ENCODE measurements at regions of chr17 and their contacts with region 1.

Region 1: GRCh38 chr17:35170968-35171771 is 23.0 kb downstream of the SLC35G3 start:
- DNase-seq: no peak
- H3K4me3 ChIP-seq: no peak overlapping the region
- H3K27ac ChIP-seq: peak overlapping the region in 4 of 8 donors; percentile 4 to 20 (median 10)
- H3K4me1 ChIP-seq: peaks cover 0 to 20% (median 10%) of the 10 kb centered on the region in 6 donors
- H3K27me3 ChIP-seq: no peaks in the 10 kb centered on the region
- CTCF ChIP-seq: peak in 10 of 11 experiments; percentile 35 to 69 (median 50)
- POLR2A ChIP-seq: no peak

Region 2: DNA sequence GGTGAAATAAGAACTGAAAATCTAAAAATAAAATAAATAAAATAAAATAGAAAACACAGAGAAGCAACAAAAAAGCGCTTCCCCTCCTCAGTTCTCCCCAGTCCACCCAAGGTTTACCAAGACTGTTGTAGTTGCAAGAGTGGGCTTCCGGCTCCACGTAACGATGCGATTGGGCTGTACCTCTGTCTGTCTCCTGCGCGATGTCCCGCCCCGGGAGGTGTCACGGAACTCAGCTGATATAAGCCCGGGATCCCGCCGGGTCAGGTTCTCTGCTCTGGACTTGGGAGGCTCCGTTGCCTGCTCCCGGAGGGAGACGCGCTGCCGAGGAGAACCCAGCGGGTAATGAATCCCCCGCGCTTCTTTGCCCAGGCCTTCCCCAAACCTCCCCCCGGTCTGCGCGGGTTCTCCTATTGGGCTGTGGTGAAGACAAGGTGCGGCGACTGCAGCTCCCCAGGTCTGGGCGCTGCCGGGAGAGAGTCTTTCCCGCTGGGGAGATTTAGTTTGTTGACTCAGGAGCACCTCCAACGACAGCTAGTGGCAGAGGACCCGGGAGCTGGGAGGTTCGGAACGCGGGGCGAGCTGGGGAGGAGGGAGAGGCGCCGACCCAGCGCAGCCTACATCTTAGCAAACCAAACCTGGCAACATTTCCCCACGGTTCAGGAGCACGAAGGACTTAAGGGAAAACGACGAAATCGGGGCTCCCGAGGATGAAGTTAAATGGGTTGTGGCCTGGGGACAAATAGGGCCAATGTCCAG is 71.8 kb after region 1 on chr17 and contains the start of gene SLFN5:
- intact Hi-C with region 1: loop called (anchors 10 kb)
- DNase-seq: peak; percentile 96
- H3K4me3 ChIP-seq: peak within 1 kb of the TSS; percentile 60 to 83 (median 77)
- H3K27ac ChIP-seq: peak within 1 kb of the TSS; percentile 87 to 97 (median 95)
- H3K4me1 ChIP-seq: peaks cover 23 to 92% (median 69%) of the 10 kb centered on the region in 6 donors
- H3K27me3 ChIP-seq: no peaks in the 10 kb centered on the region
- CTCF ChIP-seq: no peak
- POLR2A ChIP-seq: peak; percentile 45 to 90 (median 57)
- total RNA-seq, gene SLFN5: 67.9 to 110 (median 77.6) TPM

Measured in spleen (tissue), 13 donors.